Left ventricle myocardium superior (tissue), 1 donor: ENCODE measurements at regions of chr4 and their contacts with region 1.

Region 1: DNA sequence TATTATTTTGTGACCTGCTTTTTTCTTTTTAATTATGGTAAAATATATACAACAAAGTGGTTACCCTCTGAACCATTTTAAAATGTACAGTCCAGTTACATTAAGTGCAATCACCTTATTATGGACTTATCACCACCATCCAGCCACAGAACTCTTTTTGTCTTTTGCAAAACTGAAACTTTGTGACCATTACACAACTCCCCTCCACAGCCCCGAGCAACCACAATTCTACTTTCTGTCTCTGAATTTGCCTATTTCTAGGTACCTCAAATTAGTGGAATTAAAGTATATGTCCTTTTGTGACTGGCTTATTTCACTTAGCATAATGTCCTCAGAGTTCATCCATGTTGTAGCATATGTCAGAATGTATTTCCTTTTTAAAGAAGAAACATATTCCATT is 39.3 kb upstream of the WWC2 start:
- DNase-seq: no peak
- ATAC-seq: no peak

Region 2: DNA sequence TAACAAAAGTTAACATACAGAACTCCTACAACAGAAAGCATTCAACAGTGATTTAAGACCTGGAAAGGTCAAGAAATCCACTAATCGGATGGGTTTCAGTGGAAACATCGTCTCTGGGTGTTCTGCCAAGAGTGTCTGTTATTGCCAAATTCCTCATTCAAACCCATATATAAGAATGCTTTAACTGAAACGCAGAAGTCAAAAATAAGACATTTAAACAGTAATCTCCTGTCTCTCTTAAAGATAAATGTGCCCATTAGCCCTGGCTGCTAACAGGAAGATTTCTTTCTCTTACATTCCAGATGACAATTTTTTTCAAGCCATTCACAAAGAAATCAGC is 174.1 kb before region 1 on chr4:
- intact Hi-C with region 1: no loop called
- DNase-seq: no peak
- ATAC-seq: no peak

Region 3: GRCh38 chr4:182955411-182955810 is 104.4 kb before region 1 on chr4:
- intact Hi-C with region 1: loop called (anchors 10 kb)
- DNase-seq: no peak
- ATAC-seq: no peak

Region 4: GRCh38 chr4:182994171-182994570 is 65.6 kb before region 1 on chr4:
- intact Hi-C with region 1: no loop called
- DNase-seq: no peak
- ATAC-seq: no peak